HEK293 (cell line): ENCODE measurements at regions of chr6 and their contacts with region 1.

Region 1: DNA sequence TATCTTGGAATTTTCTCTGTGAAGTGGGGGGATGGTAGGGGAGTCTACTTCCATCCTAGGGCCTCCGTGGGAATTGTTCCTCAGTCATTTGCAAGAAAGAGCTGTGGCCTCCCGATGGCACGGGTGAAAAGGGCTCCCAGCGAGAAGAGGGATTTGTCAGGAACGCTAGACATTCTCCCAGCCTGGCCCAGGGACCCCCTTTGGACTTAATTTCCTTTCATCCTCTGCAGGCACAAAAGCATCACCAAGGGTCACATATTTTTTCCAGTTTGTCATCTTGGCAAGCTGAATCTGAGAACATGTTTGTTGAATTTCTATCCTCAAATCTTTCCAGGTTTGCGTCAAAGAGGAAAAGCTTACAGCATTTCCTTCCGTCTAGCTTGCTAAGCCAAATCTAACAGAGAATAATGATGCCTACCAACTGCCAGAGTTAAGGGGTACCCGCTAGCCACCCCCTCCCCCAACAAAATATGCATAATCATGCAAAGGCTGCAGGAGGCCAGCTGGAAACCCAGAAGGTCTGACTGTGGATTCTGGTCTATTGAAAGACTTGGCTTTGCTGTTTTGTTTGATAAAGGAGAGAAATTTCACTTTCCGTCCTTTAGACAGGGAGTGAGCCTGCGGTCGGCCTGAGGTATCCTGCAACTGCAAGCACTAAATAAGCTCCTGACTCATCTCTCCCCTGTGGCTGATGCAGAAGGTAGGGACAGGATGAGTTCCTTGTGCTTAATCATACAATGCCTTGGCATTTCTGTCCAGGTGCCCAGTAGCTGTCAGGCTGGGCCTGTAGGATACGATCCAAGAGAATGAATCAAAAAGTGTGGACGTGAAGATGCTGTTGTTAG is 23.1 kb downstream of the PSMG4 start:
- H3K4me3 ChIP-seq: no peak overlapping the region
- H3K27ac ChIP-seq: no peak overlapping the region
- H3K4me1 ChIP-seq: no peaks in the 10 kb centered on the region
- CTCF ChIP-seq: no peak

Region 2: GRCh38 chr6:3137057-3137777 is 144.6 kb before region 1 on chr6:
- CTCF ChIA-PET with region 1: no interaction called
- POLR2A ChIA-PET with region 1: no interaction called
- H3K4me3 ChIP-seq: no peak overlapping the region
- H3K27ac ChIP-seq: no peak overlapping the region
- H3K4me1 ChIP-seq: no peaks in the 10 kb centered on the region
- CTCF ChIP-seq: no peak

Region 3: GRCh38 chr6:3297006-3297405 is 15.2 kb after region 1 on chr6:
- CTCF ChIA-PET with region 1: interaction called, 10 read pairs
- POLR2A ChIA-PET with region 1: no interaction called
- H3K4me3 ChIP-seq: no peak overlapping the region
- H3K27ac ChIP-seq: no peak overlapping the region
- H3K4me1 ChIP-seq: no peaks in the 10 kb centered on the region
- CTCF ChIP-seq: no peak

Region 4: DNA sequence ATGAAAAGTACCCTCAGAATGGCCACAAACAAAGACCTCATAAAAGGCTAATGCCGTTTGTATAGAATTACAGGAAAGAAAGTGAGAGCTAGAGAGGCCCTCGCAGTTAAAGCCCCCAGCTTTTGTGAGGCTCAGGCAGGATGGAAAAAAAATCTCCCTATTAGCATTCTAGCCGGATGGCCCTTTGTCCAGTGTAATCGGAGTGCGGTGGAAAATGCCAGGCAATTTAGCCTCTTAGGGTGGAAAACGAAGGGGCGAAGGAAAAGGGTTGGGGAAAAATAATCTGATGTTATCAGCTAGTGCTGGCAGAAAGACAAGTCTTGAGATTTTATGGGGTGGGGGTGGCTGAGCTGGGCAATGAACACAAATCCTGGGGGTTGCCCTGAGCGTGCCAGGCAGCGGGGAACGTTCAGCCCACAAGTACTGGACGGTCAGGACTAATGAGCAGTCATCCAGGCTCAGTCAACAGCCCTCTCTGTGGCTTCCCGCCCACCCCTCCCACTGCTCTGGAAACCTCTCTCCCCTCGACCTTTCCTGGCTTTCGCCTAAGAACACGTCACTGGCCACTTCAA is 69.3 kb after region 1 on chr6:
- CTCF ChIA-PET with region 1: no interaction called
- POLR2A ChIA-PET with region 1: no interaction called
- H3K4me3 ChIP-seq: no peak overlapping the region
- H3K27ac ChIP-seq: peak overlapping the region; percentile 40; the same call in 1 of the 2 replicates
- H3K4me1 ChIP-seq: peaks cover 32% of the 10 kb centered on the region
- CTCF ChIP-seq: no peak

Region 5: DNA sequence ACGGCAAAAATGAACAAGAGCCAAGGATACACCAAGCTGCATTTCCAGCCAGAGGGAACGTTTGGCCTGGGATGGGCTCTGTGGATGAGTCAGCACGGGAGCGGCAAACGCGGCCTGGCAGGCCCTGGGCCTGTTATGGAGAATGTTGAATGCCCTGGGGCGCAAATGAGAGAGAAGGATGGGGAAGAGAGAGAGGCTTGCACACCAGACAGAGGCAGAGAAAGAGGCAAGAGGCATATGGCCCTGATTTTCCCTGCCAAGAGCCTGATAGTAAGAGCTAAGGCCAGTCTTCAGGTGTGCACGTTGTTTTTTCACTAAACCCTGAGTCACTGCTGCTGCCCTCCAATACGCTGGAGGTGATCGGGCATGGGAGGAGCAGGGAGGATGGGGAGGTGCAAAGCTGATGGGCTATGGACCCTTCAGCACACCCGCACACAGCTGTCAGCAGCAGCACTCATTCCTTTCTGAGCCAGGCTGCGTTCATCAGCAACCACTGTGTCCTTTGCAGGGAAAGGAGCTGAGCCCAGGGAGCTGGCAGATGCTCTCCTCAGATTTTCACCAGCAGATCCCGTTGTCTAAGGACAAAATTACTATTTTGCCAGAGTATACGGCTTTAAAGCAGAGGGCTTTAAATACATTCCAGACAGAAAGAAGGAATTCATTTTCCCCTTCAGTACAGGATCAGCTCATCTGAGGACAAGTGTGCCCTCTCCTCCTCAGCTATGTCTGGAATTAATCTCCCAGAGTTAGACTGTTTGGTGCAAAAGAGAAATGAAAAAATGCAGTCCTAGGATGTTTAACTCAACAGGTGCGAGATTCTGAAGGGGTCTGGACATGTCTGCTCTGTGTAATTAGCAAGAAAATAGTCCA is 236.7 kb after region 1 on chr6:
- CTCF ChIA-PET with region 1: no interaction called
- POLR2A ChIA-PET with region 1: no interaction called
- H3K4me3 ChIP-seq: no peak overlapping the region
- H3K27ac ChIP-seq: no peak overlapping the region
- H3K4me1 ChIP-seq: no peaks in the 10 kb centered on the region
- CTCF ChIP-seq: no peak

Region 6: DNA sequence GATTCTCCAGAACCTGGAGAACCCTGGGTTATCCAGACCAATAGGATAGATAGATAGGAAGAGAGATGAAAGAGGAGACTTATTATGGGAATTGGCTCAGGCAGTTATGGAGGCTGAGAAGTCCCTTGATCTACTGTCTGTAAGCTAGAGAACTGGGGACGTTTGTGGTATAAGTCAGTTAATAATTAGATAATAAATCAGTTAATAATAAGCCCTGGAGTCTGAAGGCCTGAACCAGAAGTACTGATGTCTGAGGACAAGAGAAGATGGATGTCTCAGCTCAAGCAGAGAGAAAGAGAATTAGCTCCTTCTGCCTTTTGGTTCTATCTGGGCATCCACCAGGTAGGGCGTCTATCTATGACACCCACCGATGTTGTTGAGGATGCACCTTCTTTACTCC is 247.9 kb after region 1 on chr6:
- CTCF ChIA-PET with region 1: no interaction called
- POLR2A ChIA-PET with region 1: no interaction called
- H3K4me3 ChIP-seq: no peak overlapping the region
- H3K27ac ChIP-seq: no peak overlapping the region
- H3K4me1 ChIP-seq: no peaks in the 10 kb centered on the region
- CTCF ChIP-seq: no peak